Activated CD4-positive, alpha-beta memory T cell treated with anti-CD3 and anti-CD28 coated beads, Interleukin-2, amount 10 ng/mL, durations not matched to agents 7 days and 5 days (primary cell): ENCODE measurements at regions of chr3 and their contacts with region 1.

Region 1: DNA sequence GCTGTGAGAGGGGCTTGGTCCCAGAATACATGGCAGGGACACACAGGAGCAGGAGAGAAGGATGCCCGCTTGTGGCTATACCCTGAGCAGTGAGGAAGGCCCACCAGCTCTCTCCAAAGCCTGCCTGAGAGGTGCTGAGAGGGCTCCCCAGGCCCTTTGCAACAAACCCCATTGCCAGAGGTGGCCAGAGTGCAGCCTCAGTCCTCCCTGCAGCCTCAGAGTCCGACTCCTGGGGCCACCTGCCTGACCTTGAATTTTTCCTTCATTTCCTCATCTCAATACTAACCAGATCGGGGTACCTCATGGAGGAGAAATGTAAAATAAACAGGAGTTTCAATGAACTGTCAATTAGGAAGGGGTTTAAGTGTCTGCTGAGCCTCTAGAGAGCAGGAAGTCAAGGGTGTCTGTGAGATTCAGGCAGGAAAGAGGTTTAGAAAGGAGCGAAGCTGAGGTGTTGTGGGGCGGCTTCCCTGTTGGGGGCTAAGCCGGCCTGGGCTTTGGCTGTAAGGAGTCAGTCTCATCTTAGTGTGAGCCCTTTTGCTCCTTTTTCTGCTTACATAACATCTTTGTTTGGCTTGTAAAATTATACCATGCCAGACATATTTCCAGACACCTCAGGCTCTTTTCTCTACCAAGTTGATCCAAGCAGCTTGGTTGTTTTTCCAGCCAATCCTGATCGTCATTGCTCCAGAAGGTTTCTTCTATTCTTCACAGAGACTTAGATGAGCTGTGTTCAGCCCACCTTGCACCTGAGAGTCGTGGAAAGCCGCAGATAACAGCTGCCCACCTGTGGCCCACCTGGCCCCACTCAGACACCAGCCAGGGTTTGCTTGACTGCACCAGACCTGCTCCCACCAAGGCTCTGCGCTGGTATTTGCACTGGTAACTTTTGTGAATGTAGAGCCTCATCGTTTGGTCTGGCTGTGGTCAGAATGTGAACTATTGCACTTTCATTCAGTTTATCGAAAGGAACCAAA is 36.7 kb downstream of the CMTM7 start:
- DNase-seq: peak; percentile 49
- H3K4me3 Mint-ChIP-seq: peak overlapping the region; percentile 60
- H3K27ac Mint-ChIP-seq: peak overlapping the region; percentile 93
- H3K4me1 Mint-ChIP-seq: peaks cover 92% of the 10 kb centered on the region
- H3K27me3 Mint-ChIP-seq: no peaks in the 10 kb centered on the region

Region 2: GRCh38 chr3:32391643-32392535 is 36.5 kb before region 1 on chr3 and contains the start of gene CMTM7:
- CTCF ChIA-PET with region 1: interaction called, 4 read pairs
- POLR2A ChIA-PET with region 1: interaction called, 11 read pairs
- DNase-seq: peak; percentile 74
- H3K4me3 Mint-ChIP-seq: peak within 1 kb of the TSS; percentile 97
- H3K27ac Mint-ChIP-seq: peak within 1 kb of the TSS; percentile 90
- H3K4me1 Mint-ChIP-seq: peaks cover 52% of the 10 kb centered on the region
- H3K27me3 Mint-ChIP-seq: no peaks in the 10 kb centered on the region
- total RNA-seq, gene CMTM7: 47.0 to 47.3 TPM

Region 3: GRCh38 chr3:32414520-32415202 is 13.7 kb before region 1 on chr3:
- CTCF ChIA-PET with region 1: interaction called, 11 read pairs
- POLR2A ChIA-PET with region 1: interaction called, 30 read pairs
- DNase-seq: peak; percentile 60
- H3K4me3 Mint-ChIP-seq: peak overlapping the region; percentile 3
- H3K27ac Mint-ChIP-seq: peak overlapping the region; percentile 74
- H3K4me1 Mint-ChIP-seq: peaks cover 60% of the 10 kb centered on the region
- H3K27me3 Mint-ChIP-seq: no peaks in the 10 kb centered on the region

Region 4: GRCh38 chr3:32450992-32451659 is 22.7 kb after region 1 on chr3:
- CTCF ChIA-PET with region 1: interaction called, 5 read pairs
- POLR2A ChIA-PET with region 1: interaction called, 16 read pairs
- DNase-seq: peak; percentile 6
- H3K4me3 Mint-ChIP-seq: no peak overlapping the region
- H3K27ac Mint-ChIP-seq: no peak overlapping the region
- H3K4me1 Mint-ChIP-seq: peaks cover 23% of the 10 kb centered on the region
- H3K27me3 Mint-ChIP-seq: no peaks in the 10 kb centered on the region

Region 5: GRCh38 chr3:32460031-32460749 is 31.8 kb after region 1 on chr3:
- CTCF ChIA-PET with region 1: interaction called, 7 read pairs
- POLR2A ChIA-PET with region 1: interaction called, 16 read pairs
- DNase-seq: peak; percentile 82
- H3K4me3 Mint-ChIP-seq: peak overlapping the region; percentile 69
- H3K27ac Mint-ChIP-seq: peak overlapping the region; percentile 96
- H3K4me1 Mint-ChIP-seq: peaks cover 31% of the 10 kb centered on the region
- H3K27me3 Mint-ChIP-seq: no peaks in the 10 kb centered on the region